ENCODE measurements at regions of chr11 and their contacts with region 1.

Region 1: GRCh38 chr11:75328426-75329277 is 22.8 kb downstream of the ARRB1 start:
- DNase-seq: peak; percentile 57 to 68 (median 66)
- H3K4me3 ChIP-seq: peak overlapping the region; percentile 10 to 11
- H3K4me3 Mint-ChIP-seq: peak overlapping the region; percentile 25 to 69 (median 56)
- H3K27ac ChIP-seq: peak overlapping the region; percentile 25
- H3K27ac Mint-ChIP-seq: peak overlapping the region; percentile 65 to 91 (median 86)
- H3K4me1 ChIP-seq: peaks cover 54% of the 10 kb centered on the region
- H3K4me1 Mint-ChIP-seq: peaks cover 44 to 78% (median 59%) of the 10 kb centered on the region in 4 donors
- H3K27me3 ChIP-seq: no peaks in the 10 kb centered on the region
- H3K27me3 Mint-ChIP-seq: no peaks in the 10 kb centered on the region

Region 2: GRCh38 chr11:75342903-75343870 is 14.5 kb after region 1 on chr11:
- CTCF ChIA-PET with region 1: interaction called, 42 read pairs
- POLR2A ChIA-PET with region 1: interaction called, 22 read pairs
- intact Hi-C with region 1: no loop called
- DNase-seq: no peak
- H3K4me3 ChIP-seq: no peak overlapping the region
- H3K4me3 Mint-ChIP-seq: peak overlapping the region in 2 of 8 donors; percentile 13 to 31
- H3K27ac ChIP-seq: no peak overlapping the region
- H3K27ac Mint-ChIP-seq: peak overlapping the region; percentile 63 to 93 (median 90)
- H3K4me1 ChIP-seq: peaks cover 98% of the 10 kb centered on the region
- H3K4me1 Mint-ChIP-seq: peaks cover 56 to 100% (median 81%) of the 10 kb centered on the region in 4 donors
- H3K27me3 ChIP-seq: no peaks in the 10 kb centered on the region
- H3K27me3 Mint-ChIP-seq: no peaks in the 10 kb centered on the region

Region 3: GRCh38 chr11:75351791-75352587 is 23.3 kb after region 1 on chr11:
- CTCF ChIA-PET with region 1: interaction called, 13 read pairs
- POLR2A ChIA-PET with region 1: interaction called, 28 read pairs
- intact Hi-C with region 1: loop called (anchors 2 kb)
- DNase-seq: peak; percentile 70 to 80 (median 74)
- H3K4me3 ChIP-seq: peak overlapping the region; percentile 77 to 83
- H3K4me3 Mint-ChIP-seq: peak overlapping the region; percentile 90 to 96 (median 94)
- H3K27ac ChIP-seq: peak overlapping the region; percentile 75
- H3K27ac Mint-ChIP-seq: peak overlapping the region; percentile 87 to 96 (median 93)
- H3K4me1 ChIP-seq: peaks cover 49% of the 10 kb centered on the region
- H3K4me1 Mint-ChIP-seq: peaks cover 40 to 73% (median 55%) of the 10 kb centered on the region in 4 donors
- H3K27me3 ChIP-seq: no peaks in the 10 kb centered on the region
- H3K27me3 Mint-ChIP-seq: no peaks in the 10 kb centered on the region